ENCODE measurements at regions of chr6 and their contacts with region 1.

Region 1: GRCh38 chr6:96542702-96543101 is 20.2 kb upstream of the FHL5 start:
- DNase-seq: no peak
- H3K4me3 ChIP-seq: no peak overlapping the region
- H3K27ac ChIP-seq: no peak overlapping the region
- H3K4me1 ChIP-seq: no peaks in the 10 kb centered on the region
- H3K27me3 ChIP-seq: no peaks in the 10 kb centered on the region
- CTCF ChIP-seq: peak; percentile 30 to 63 (median 40)

Region 2: DNA sequence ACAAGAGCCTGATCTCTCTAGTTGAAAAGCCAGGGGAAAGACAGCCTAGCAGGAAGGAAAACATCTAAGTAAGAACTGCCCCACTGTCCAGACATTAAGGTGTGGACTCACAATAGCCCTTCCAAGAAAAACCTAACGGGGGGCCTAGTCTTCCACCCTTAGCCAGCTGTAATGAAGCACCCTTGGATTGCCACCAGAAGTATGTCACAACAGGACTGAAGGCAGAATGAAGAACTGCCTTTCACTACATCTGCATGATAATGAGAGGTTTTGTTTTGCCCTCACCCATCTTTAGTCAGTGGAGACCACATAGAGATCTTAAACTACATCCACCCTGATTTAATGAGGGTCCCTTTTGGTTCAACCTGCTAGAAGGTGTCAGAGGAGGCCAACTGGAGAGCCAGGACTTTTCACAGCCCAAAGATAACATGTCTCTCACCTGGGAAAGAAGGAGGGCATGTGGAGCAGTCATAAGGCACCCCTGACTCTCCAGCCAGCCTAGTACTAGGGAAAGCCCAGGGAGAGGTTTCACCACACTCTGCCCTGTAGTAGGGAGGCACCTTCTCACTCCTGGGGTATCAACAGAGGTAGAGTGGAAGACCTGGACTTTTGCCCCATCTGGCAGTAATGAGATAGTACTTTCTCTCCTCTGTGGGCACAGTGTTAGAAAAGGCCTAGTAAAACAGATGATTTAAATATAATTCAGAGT is 1982.7 kb before region 1 on chr6:
- intact Hi-C with region 1: no loop called
- DNase-seq: no peak
- H3K4me3 ChIP-seq: no peak overlapping the region
- H3K27ac ChIP-seq: no peak overlapping the region
- H3K4me1 ChIP-seq: no peaks in the 10 kb centered on the region
- H3K27me3 ChIP-seq: no peaks in the 10 kb centered on the region
- CTCF ChIP-seq: no peak

Region 3: DNA sequence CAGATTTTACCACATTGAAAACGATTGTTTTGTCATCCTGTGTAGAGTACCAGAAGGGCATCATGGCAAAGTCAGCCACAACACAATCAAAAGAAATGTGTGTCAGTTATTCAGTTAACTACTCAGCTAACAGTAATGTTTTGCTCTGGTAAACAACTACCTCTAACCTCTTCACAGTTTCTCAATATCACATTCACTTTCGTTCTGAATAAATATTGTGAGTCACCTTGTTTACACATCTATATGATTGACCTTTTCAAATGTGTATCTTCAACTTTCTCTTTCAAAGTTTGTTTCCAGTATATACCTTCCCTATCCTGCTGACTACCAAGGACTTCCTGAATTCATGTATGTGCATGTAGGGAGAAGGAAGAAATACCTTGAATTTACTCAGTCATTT is 237.7 kb before region 1 on chr6:
- intact Hi-C with region 1: no loop called
- DNase-seq: no peak
- H3K4me3 ChIP-seq: no peak overlapping the region
- H3K27ac ChIP-seq: no peak overlapping the region
- H3K4me1 ChIP-seq: no peaks in the 10 kb centered on the region
- H3K27me3 ChIP-seq: no peaks in the 10 kb centered on the region
- CTCF ChIP-seq: no peak

Region 4: GRCh38 chr6:96478695-96479094 is 64.0 kb before region 1 on chr6:
- intact Hi-C with region 1: no loop called
- DNase-seq: no peak
- H3K4me3 ChIP-seq: no peak overlapping the region
- H3K27ac ChIP-seq: no peak overlapping the region
- H3K4me1 ChIP-seq: no peaks in the 10 kb centered on the region
- H3K27me3 ChIP-seq: no peaks in the 10 kb centered on the region
- CTCF ChIP-seq: no peak

Region 5: DNA sequence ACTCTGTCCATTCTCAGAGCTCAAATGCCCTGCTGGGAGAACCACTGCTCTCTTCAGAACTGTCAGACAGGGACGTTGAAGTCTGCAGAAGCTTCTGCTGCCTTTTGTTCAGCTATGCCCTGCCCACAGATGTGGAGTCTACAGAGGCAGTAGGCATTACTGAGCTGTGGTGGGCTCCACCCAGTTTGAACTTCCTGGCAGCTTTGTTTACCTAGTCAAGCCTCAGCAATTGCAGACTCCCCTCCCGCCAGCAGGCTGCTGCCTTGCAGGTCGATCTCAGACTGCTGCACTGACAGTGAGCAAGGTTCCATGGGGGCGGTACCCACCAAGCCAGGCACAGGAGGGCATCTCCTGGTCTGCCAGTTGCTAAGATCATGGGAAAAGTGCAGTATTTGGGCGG is 42.9 kb before region 1 on chr6:
- intact Hi-C with region 1: no loop called
- DNase-seq: no peak
- H3K4me3 ChIP-seq: no peak overlapping the region
- H3K27ac ChIP-seq: no peak overlapping the region
- H3K4me1 ChIP-seq: no peaks in the 10 kb centered on the region
- H3K27me3 ChIP-seq: no peaks in the 10 kb centered on the region
- CTCF ChIP-seq: no peak

Region 6: GRCh38 chr6:96760153-96760687 is 217.5 kb after region 1 on chr6:
- intact Hi-C with region 1: loop called (anchors 2 kb)
- DNase-seq: no peak
- H3K4me3 ChIP-seq: no peak overlapping the region
- H3K27ac ChIP-seq: no peak overlapping the region
- H3K4me1 ChIP-seq: no peaks in the 10 kb centered on the region
- H3K27me3 ChIP-seq: no peaks in the 10 kb centered on the region
- CTCF ChIP-seq: peak in 1 of 3 experiments; percentile 24